ENCODE measurements at regions of chr11 and their contacts with region 1.

Region 1: GRCh38 chr11:63478896-63479295 is 12.1 kb downstream of the PLAAT5 start:
- DNase-seq: peak; percentile 44
- H3K4me3 ChIP-seq: no peak overlapping the region
- H3K27ac ChIP-seq: no peak overlapping the region
- H3K4me1 ChIP-seq: peaks cover 3% of the 10 kb centered on the region
- H3K27me3 ChIP-seq: no peaks in the 10 kb centered on the region
- CTCF ChIP-seq: peak; percentile 90 to 96

Region 2: DNA sequence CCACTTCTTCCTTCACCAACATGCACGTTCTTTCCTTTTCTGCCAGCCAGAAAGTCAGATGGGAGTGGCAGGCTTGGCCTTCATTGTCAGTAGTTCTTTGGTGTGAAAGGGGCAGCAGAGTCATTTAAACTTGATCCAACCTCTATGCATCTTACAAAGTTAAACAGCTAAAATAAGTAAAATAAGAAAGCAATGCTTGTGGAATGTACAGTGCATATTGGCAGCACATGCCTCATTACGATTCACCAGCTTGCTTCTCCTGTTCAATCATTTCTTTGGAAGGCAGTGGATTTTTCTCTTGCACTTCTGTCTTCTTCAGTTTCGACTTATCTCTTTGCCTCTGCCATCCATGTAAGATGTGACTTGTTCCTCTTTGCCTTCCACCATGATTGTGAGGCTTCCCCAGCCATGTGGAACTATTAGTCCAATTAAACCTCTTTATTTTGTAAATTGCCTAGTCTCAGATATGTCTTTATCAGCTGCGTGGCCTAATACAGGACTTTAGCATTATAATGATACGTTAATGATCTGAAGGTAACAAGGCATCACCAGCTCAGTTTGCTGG is 41.8 kb after region 1 on chr11:
- CTCF ChIA-PET with region 1: no interaction called
- dilution Hi-C with region 1: loop called (anchors 5 kb)
- in situ Hi-C with region 1: no loop called
- intact Hi-C with region 1: no loop called
- DNase-seq: no peak
- H3K4me3 ChIP-seq: no peak overlapping the region
- H3K27ac ChIP-seq: no peak overlapping the region
- H3K4me1 ChIP-seq: no peaks in the 10 kb centered on the region
- H3K27me3 ChIP-seq: no peaks in the 10 kb centered on the region
- CTCF ChIP-seq: no peak

Region 3: GRCh38 chr11:63534895-63535461 is 56.1 kb after region 1 on chr11:
- CTCF ChIA-PET with region 1: no interaction called
- dilution Hi-C with region 1: no loop called
- in situ Hi-C with region 1: no loop called
- intact Hi-C with region 1: no loop called
- DNase-seq: no peak
- H3K4me3 ChIP-seq: no peak overlapping the region
- H3K27ac ChIP-seq: no peak overlapping the region
- H3K4me1 ChIP-seq: peaks cover 18% of the 10 kb centered on the region
- H3K27me3 ChIP-seq: no peaks in the 10 kb centered on the region
- CTCF ChIP-seq: no peak

Region 4: DNA sequence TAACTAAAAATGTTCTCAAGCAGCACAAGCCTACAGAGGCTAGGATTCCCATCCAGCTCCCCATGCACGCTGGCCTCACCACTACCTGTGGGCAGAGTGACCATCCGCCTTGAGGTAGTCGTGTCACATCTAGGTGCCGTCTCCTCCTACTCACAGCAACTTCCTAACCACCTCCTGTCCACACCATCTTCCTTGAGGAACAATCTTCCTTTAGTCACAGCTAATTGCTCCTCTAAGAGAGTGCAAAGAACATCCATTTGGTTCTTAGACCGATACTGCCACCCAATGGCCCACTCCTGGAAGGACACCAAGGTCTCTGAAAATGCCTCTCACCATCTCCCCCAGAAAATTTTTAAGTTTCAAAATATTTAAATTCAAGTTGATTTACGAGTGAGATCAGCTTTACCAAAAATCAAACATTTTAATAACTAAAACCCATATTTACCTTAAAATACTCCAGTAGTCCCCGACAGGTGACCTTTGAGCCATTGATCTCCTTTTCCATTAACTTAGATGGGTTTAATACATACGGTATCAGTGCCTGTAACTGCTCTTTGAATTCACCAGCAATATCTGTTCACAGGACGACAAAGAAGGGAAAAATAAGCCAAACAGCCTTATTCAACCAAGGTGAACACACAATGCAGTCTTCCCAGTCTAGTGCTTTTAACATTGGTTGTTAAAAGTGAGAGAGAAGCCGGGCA is 157.0 kb after region 1 on chr11:
- CTCF ChIA-PET with region 1: interaction called, 4 read pairs
- dilution Hi-C with region 1: no loop called
- in situ Hi-C with region 1: loop called (anchors 5 kb)
- intact Hi-C with region 1: loop called (anchors 1 kb)
- DNase-seq: peak; percentile 37
- H3K4me3 ChIP-seq: no peak overlapping the region
- H3K27ac ChIP-seq: no peak overlapping the region
- H3K4me1 ChIP-seq: no peaks in the 10 kb centered on the region
- H3K27me3 ChIP-seq: no peaks in the 10 kb centered on the region
- CTCF ChIP-seq: peak; percentile 62 to 79

Region 5: GRCh38 chr11:63738720-63739360 is 259.9 kb after region 1 on chr11:
- CTCF ChIA-PET with region 1: no interaction called
- dilution Hi-C with region 1: no loop called
- in situ Hi-C with region 1: loop called in 1 of 2 experiments (anchors 25 kb)
- intact Hi-C with region 1: loop called (anchors 1 kb)
- DNase-seq: peak; percentile 58
- H3K4me3 ChIP-seq: no peak overlapping the region
- H3K27ac ChIP-seq: no peak overlapping the region
- H3K4me1 ChIP-seq: peaks cover 4% of the 10 kb centered on the region
- H3K27me3 ChIP-seq: no peaks in the 10 kb centered on the region
- CTCF ChIP-seq: peak; percentile 89 to 97

Region 6: DNA sequence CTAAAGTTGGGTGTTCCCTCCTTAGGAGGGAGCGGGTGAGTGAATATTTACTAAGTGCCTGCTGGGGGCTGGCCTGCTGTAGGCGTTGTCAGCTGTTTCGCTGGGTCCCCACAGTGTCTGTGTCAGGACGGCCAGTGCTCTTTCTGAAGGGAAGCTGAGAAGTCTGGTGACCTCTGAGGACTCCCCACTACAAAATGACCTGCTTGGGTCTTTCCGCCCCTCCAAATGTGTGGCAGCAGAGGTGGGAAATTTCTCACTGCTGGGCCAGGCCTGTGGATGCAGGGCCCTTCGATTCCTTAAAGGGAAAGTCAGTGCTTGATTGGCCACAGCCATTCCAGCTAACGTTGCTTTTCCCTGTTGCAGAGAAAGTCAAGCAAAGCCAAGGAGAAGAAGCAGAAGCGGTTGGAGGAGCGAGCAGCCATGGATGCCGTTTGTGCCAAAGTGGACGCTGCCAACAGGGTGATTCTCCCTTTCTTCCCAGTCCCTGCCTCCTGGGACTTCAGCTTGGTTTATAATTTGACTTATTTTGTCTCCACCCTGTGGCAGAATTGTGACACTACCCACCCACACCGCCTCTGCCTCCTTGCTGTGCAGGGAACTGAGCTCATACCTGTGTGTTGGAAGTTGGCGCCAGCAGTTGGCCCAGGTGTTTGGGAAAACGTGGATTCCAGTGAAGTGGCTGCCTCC is 466.7 kb after region 1 on chr11:
- CTCF ChIA-PET with region 1: no interaction called
- dilution Hi-C with region 1: no loop called
- in situ Hi-C with region 1: no loop called
- intact Hi-C with region 1: loop called (anchors 5 kb)
- DNase-seq: peak; percentile 64
- H3K4me3 ChIP-seq: no peak overlapping the region
- H3K27ac ChIP-seq: no peak overlapping the region
- H3K4me1 ChIP-seq: peaks cover 3% of the 10 kb centered on the region
- H3K27me3 ChIP-seq: no peaks in the 10 kb centered on the region
- CTCF ChIP-seq: peak; percentile 54 to 68

Measured in mammary epithelial cell (primary cell).